Left lung (tissue), 14 donors: ENCODE measurements at regions of chr11 and their contacts with region 1.

Region 1: GRCh38 chr11:34366522-34366921 is 8.7 kb upstream of the ABTB2 start:
- DNase-seq: peak in 1 of 4 donors; percentile 22
- ATAC-seq: no peak
- H3K4me3 ChIP-seq: no peak overlapping the region
- H3K27ac ChIP-seq: no peak overlapping the region
- H3K4me1 ChIP-seq: peaks cover 0 to 12% of the 10 kb centered on the region in 2 donors
- H3K27me3 ChIP-seq: no peaks in the 10 kb centered on the region
- CTCF ChIP-seq: peak; percentile 10 to 23

Region 2: DNA sequence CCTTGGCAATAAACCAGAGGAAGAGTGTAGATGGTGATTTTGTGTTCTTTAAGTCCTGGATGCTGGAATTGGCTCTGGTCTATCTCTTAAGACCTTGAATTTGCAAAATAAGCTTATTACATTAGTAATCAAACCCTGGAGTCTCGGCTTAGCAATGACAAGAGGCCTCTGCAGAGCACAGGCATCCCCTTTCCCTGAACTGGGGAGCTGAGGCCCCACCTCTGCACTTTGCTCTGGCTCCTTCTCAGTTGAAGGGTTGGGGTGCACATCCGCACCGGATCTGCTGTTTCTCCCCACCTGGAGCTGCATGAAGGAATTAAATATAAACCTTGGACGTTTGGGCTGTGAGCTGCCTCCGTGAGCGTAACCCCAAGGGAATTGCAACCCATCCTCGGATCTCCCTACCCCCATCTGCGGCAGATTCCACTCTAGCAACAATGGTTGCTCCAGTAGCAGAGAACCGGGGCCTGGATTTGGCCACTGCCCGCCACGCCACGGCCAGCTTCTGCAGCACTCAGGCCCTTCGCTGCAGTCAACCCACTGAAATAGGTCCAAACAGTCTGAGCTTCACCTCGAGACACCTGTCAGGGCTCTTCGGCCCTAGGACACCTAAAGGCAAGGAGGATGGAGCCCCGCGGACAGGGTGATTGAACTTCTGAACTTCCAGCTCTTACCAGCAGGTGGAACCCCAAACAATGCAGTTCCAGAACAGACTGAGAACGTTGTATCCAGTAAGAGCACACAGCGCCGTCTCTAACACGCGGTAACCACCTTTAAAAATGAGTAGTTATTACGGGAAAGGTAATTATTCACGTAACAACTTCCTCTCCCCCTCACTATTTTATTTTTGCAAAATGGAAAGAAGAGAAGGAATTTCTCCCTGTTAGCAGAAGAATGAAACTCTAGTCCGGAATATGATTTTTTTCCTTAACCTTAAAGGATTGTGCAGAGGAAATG is 369.7 kb before region 1 on chr11:
- intact Hi-C with region 1: loop called in 1 of 2 experiments (anchors 5 kb)
- DNase-seq: peak in 3 of 4 donors; percentile 49 to 69 (median 59)
- ATAC-seq: peak; percentile 100
- H3K4me3 ChIP-seq: no peak overlapping the region
- H3K27ac ChIP-seq: no peak overlapping the region
- H3K4me1 ChIP-seq: peaks cover 0 to 8% of the 10 kb centered on the region in 2 donors
- H3K27me3 ChIP-seq: peaks cover 0 to 23% of the 10 kb centered on the region in 2 donors
- CTCF ChIP-seq: peak; percentile 82

Region 3: GRCh38 chr11:34492806-34493414 is 126.4 kb after region 1 on chr11:
- intact Hi-C with region 1: loop called in 1 of 2 experiments (anchors 10 kb)
- DNase-seq: peak in 1 of 4 donors; percentile 65
- ATAC-seq: no peak
- H3K4me3 ChIP-seq: no peak overlapping the region
- H3K27ac ChIP-seq: no peak overlapping the region
- H3K4me1 ChIP-seq: peaks cover 3 to 6% of the 10 kb centered on the region in 2 donors
- H3K27me3 ChIP-seq: no peaks in the 10 kb centered on the region
- CTCF ChIP-seq: peak; percentile 53 to 61